Aorta (tissue), 5 donors: ENCODE measurements at regions of chr1 and their contacts with region 1.

Region 1: GRCh38 chr1:65209005-65209885 is 61.2 kb downstream of the AK4 start:
- DNase-seq: no peak
- ATAC-seq: peak; percentile 70
- H3K4me3 ChIP-seq: no peak overlapping the region
- H3K27ac ChIP-seq: no peak overlapping the region
- H3K4me1 ChIP-seq: no peaks in the 10 kb centered on the region
- H3K27me3 ChIP-seq: no peaks in the 10 kb centered on the region

Region 2: GRCh38 chr1:64882574-64883255 is 326.5 kb before region 1 on chr1:
- intact Hi-C with region 1: loop called in 1 of 2 experiments (anchors 10 kb)
- DNase-seq: no peak
- ATAC-seq: no peak
- H3K4me3 ChIP-seq: no peak overlapping the region
- H3K27ac ChIP-seq: no peak overlapping the region
- H3K4me1 ChIP-seq: no peaks in the 10 kb centered on the region
- H3K27me3 ChIP-seq: no peaks in the 10 kb centered on the region

Region 3: GRCh38 chr1:65059930-65060538 is 149.2 kb before region 1 on chr1:
- intact Hi-C with region 1: loop called (anchors 5 kb)
- DNase-seq: no peak
- ATAC-seq: no peak
- H3K4me3 ChIP-seq: no peak overlapping the region
- H3K27ac ChIP-seq: no peak overlapping the region
- H3K4me1 ChIP-seq: peaks cover 0 to 4% of the 10 kb centered on the region in 2 donors
- H3K27me3 ChIP-seq: no peaks in the 10 kb centered on the region

Region 4: GRCh38 chr1:65075123-65075976 is 133.9 kb before region 1 on chr1:
- intact Hi-C with region 1: loop called (anchors 5 kb)
- DNase-seq: peak in 1 of 2 donors; percentile 58
- ATAC-seq: peak; percentile 82
- H3K4me3 ChIP-seq: no peak overlapping the region
- H3K27ac ChIP-seq: no peak overlapping the region
- H3K4me1 ChIP-seq: no peaks in the 10 kb centered on the region
- H3K27me3 ChIP-seq: no peaks in the 10 kb centered on the region

Region 5: GRCh38 chr1:65148548-65149350 is 60.5 kb before region 1 on chr1:
- intact Hi-C with region 1: loop called (anchors 5 kb)
- DNase-seq: peak; percentile 79 to 85
- ATAC-seq: peak; percentile 88
- H3K4me3 ChIP-seq: peak overlapping the region; percentile 58 to 65
- H3K27ac ChIP-seq: peak overlapping the region; percentile 15 to 54
- H3K4me1 ChIP-seq: no peaks in the 10 kb centered on the region
- H3K27me3 ChIP-seq: no peaks in the 10 kb centered on the region

Region 6: GRCh38 chr1:65189576-65190115 is 19.6 kb before region 1 on chr1:
- intact Hi-C with region 1: loop called in 1 of 2 experiments (anchors 2 kb)
- DNase-seq: no peak
- ATAC-seq: no peak
- H3K4me3 ChIP-seq: no peak overlapping the region
- H3K27ac ChIP-seq: no peak overlapping the region
- H3K4me1 ChIP-seq: peaks cover 3 to 4% of the 10 kb centered on the region in 2 donors
- H3K27me3 ChIP-seq: no peaks in the 10 kb centered on the region